Activated naive CD4-positive, alpha-beta T cell treated with anti-CD3 and anti-CD28 coated beads for 36 hours (primary cell): ENCODE measurements at regions of chr3 and their contacts with region 1.

Region 1: DNA sequence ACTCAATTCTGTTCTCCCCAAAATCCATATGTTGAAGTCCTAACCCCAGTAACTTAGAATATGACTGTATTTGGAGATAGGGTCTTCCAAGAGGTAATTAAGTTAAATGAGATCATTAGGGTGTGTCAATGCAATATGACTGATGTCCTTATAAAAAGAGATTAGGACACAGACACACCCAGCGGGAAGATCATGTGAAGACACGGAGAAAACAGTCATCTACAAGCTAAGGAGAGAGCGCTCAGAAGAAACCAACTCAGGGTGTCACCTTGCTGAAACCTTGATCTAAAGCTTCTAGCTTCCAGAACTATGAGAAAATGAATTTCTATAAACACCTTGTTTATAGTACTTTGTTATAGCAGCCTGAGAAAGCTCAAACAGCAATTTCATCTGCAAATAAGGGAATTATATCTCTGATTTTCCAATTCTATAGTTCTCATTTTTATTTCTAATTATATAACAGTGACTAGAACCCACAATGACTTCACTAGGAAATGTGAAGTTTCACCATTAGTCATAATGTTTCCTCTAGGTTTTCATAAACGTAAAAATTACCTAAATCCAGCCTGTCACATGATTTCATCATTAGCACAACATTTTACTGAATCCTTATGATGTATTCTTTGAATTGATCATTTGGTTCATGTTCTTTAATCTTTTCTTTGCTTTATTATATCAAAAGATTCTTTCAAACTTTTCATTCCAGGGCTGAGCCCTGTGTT is 459.1 kb upstream of the MDFIC2 start:
- DNase-seq: no peak
- H3K4me3 Mint-ChIP-seq: no peak overlapping the region
- H3K27ac Mint-ChIP-seq: no peak overlapping the region
- H3K4me1 Mint-ChIP-seq: peaks cover 14% of the 10 kb centered on the region
- H3K27me3 Mint-ChIP-seq: peaks cover 25% of the 10 kb centered on the region

Region 2: GRCh38 chr3:70603103-70603502 is 168.5 kb before region 1 on chr3:
- CTCF ChIA-PET with region 1: no interaction called
- intact Hi-C with region 1: loop called (anchors 2 kb)
- DNase-seq: peak; percentile 55
- H3K4me3 Mint-ChIP-seq: no peak overlapping the region
- H3K27ac Mint-ChIP-seq: peak overlapping the region; percentile 28
- H3K4me1 Mint-ChIP-seq: peaks cover 10% of the 10 kb centered on the region
- H3K27me3 Mint-ChIP-seq: peaks cover 13% of the 10 kb centered on the region

Region 3: GRCh38 chr3:70702132-70702531 is 69.5 kb before region 1 on chr3:
- CTCF ChIA-PET with region 1: no interaction called
- intact Hi-C with region 1: no loop called
- DNase-seq: no peak
- H3K4me3 Mint-ChIP-seq: no peak overlapping the region
- H3K27ac Mint-ChIP-seq: no peak overlapping the region
- H3K4me1 Mint-ChIP-seq: peaks cover 19% of the 10 kb centered on the region
- H3K27me3 Mint-ChIP-seq: peaks cover 18% of the 10 kb centered on the region

Region 4: GRCh38 chr3:70982700-70983140 is 211.1 kb after region 1 on chr3:
- CTCF ChIA-PET with region 1: no interaction called
- intact Hi-C with region 1: loop called (anchors 5 kb)
- DNase-seq: peak; percentile 66
- H3K4me3 Mint-ChIP-seq: no peak overlapping the region
- H3K27ac Mint-ChIP-seq: peak overlapping the region; percentile 96
- H3K4me1 Mint-ChIP-seq: peaks cover 74% of the 10 kb centered on the region
- H3K27me3 Mint-ChIP-seq: no peaks in the 10 kb centered on the region

Region 5: GRCh38 chr3:71069797-71070196 is 298.2 kb after region 1 on chr3:
- CTCF ChIA-PET with region 1: no interaction called
- intact Hi-C with region 1: loop called (anchors 1 kb)
- DNase-seq: peak; percentile 92
- H3K4me3 Mint-ChIP-seq: no peak overlapping the region
- H3K27ac Mint-ChIP-seq: peak overlapping the region; percentile 57
- H3K4me1 Mint-ChIP-seq: peaks cover 78% of the 10 kb centered on the region
- H3K27me3 Mint-ChIP-seq: no peaks in the 10 kb centered on the region

Region 6: DNA sequence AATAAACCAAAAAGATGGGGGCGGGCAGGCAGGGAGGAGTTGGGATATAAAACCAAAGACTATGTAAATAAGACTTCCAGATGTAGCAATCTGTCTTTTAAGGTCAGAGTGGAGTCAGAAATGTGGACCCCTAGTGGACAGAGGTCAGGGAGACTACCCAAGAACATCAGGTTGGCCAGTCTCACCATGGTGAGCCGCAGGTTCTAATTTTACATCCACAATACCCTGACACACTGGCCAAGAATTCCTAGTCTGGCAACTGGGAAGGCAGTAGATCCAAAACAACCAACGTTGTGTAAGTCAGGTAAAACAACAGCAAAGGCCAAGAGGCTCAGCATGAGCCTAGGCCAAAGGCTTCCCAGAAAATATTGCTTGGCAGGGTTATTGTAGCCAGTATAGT is 608.5 kb after region 1 on chr3:
- CTCF ChIA-PET with region 1: no interaction called
- intact Hi-C with region 1: loop called (anchors 5 kb)
- DNase-seq: no peak
- H3K4me3 Mint-ChIP-seq: no peak overlapping the region
- H3K27ac Mint-ChIP-seq: peak overlapping the region; percentile 69
- H3K4me1 Mint-ChIP-seq: peaks cover 88% of the 10 kb centered on the region
- H3K27me3 Mint-ChIP-seq: no peaks in the 10 kb centered on the region